Endothelial cell of umbilical vein (primary cell): ENCODE measurements at regions of chr14 and their contacts with region 1.

Region 1: DNA sequence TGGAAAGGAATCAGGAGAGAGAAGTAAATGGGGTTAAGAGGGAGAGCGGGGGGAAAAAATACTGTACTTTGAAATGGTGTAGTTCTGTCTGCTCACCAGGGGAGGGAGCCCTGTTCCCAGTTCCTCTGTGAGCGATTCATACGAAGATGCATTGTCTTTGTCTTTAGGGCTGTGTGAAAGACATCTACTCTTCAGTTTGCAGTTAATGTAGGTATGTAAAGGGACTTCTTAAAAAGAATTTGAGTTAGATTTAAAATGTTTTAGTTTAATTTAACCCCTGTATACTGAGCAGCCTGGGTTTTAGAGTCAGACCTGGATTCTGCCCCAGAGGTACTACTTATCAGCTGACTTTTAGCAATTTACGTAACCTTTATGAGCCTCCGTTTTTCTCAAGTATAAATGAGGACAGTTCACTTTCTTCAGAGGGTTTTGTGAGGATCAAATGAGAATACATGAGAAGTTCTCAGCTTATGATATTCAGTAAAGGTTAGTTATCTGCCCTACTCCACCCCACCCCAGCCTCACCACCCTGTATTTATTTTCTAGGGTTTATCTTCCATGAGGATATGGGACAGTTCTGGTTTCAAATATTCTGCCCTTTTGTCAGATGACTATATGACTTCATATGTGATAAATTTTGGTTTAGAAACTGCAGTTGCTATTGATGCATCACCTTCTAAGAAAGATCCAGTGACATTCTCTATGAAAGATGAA is 82.5 kb upstream of the EVL start:
- DNase-seq: peak; percentile 73
- H3K4me3 ChIP-seq: no peak overlapping the region
- H3K27ac ChIP-seq: no peak overlapping the region
- H3K4me1 ChIP-seq: peaks cover 6% of the 10 kb centered on the region
- H3K27me3 ChIP-seq: no peaks in the 10 kb centered on the region
- CTCF ChIP-seq: peak; percentile 75 to 82
- POLR2A ChIP-seq: no peak

Region 2: DNA sequence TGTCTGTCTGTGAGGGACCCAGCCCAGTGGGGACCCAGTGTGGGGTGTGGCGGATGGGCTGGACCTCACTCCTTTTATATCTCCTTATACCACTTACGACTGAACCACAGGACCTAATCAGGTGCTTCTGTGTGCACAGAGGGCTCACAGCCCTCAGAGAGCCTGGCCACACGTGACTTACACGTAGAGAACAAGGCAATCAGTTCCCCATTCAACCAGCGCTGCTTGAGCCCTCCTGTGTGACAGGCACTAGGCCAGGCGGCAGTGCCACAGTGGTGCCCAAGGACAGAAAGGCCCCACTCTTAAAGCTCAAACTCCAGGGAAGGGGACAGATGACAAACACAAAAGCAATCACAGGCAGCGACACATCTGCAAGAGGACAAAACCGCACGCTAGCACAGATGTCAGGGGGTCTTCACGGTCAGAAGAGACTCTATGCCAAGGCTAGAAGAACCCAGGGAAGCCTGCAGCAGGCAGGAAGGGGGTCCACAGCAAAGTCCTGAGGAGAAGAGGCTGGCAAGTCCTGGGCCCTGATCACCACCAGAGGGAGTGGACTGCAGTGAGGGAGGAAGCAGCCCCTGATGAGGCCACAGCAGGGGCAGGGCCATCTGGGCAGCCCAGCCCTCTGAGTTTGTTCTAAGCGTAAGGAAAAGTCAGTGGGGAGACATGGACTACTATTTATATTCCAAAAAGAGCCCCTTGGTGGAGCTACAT is 541.4 kb before region 1 on chr14:
- CTCF ChIA-PET with region 1: no interaction called
- POLR2A ChIA-PET with region 1: no interaction called
- dilution Hi-C with region 1: no loop called
- intact Hi-C with region 1: no loop called
- DNase-seq: no peak
- H3K4me3 ChIP-seq: no peak overlapping the region
- H3K27ac ChIP-seq: no peak overlapping the region
- H3K4me1 ChIP-seq: peaks cover 6% of the 10 kb centered on the region
- H3K27me3 ChIP-seq: no peaks in the 10 kb centered on the region
- CTCF ChIP-seq: peak in 1 of 2 donors; percentile 18
- POLR2A ChIP-seq: no peak

Region 3: DNA sequence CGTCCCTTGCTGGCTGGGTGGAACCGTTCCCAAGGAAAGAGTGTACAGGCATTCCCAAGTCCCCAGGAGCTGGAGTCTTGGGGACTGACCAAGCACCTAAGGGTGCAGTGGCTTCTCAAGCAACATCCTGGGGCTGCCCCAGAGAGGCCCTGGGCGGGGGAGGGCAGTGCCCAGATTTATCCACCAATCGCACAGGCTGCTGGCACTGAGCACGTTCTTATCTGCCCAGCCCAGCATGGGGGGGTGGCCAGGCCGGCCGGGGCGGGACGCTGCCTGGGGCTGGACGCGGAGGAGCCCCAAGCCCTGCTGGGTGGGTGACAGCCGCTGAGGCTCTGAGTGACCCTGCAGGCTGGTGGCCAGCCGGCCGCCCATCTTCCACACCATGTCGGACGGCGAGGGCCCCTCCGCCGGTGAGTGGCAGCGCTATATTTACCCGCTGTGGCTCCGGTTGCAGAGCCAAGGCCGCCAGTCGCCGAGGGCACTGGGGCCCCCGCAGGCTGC is 245.2 kb before region 1 on chr14:
- CTCF ChIA-PET with region 1: no interaction called
- POLR2A ChIA-PET with region 1: no interaction called
- dilution Hi-C with region 1: no loop called
- intact Hi-C with region 1: no loop called
- DNase-seq: peak; percentile 79
- H3K4me3 ChIP-seq: peak overlapping the region; percentile 39 to 57 (median 55)
- H3K27ac ChIP-seq: peak overlapping the region; percentile 81
- H3K4me1 ChIP-seq: peaks cover 39% of the 10 kb centered on the region
- H3K27me3 ChIP-seq: no peaks in the 10 kb centered on the region
- CTCF ChIP-seq: no peak
- POLR2A ChIP-seq: peak; percentile 53

Region 4: GRCh38 chr14:99971087-99971940 is 11.4 kb before region 1 on chr14:
- CTCF ChIA-PET with region 1: interaction called, 8 read pairs
- POLR2A ChIA-PET with region 1: interaction called, 3 read pairs
- dilution Hi-C with region 1: no loop called
- intact Hi-C with region 1: loop called (anchors 1 kb)
- DNase-seq: peak; percentile 85
- H3K4me3 ChIP-seq: peak overlapping the region; percentile 47 to 80 (median 49)
- H3K27ac ChIP-seq: no peak overlapping the region
- H3K4me1 ChIP-seq: peaks cover 7% of the 10 kb centered on the region
- H3K27me3 ChIP-seq: peaks cover 10 to 12% of the 10 kb centered on the region in 2 experiments
- CTCF ChIP-seq: no peak
- POLR2A ChIP-seq: peak; percentile 33

Region 5: GRCh38 chr14:100025111-100025510 is 42.4 kb after region 1 on chr14:
- CTCF ChIA-PET with region 1: interaction called, 5 read pairs
- POLR2A ChIA-PET with region 1: no interaction called
- dilution Hi-C with region 1: no loop called
- intact Hi-C with region 1: loop called (anchors 1 kb)
- DNase-seq: peak; percentile 35
- H3K4me3 ChIP-seq: no peak overlapping the region
- H3K27ac ChIP-seq: no peak overlapping the region
- H3K4me1 ChIP-seq: peaks cover under 1% of the 10 kb centered on the region
- H3K27me3 ChIP-seq: no peaks in the 10 kb centered on the region
- CTCF ChIP-seq: peak in 1 of 2 donors; percentile 48
- POLR2A ChIP-seq: no peak

Region 6: DNA sequence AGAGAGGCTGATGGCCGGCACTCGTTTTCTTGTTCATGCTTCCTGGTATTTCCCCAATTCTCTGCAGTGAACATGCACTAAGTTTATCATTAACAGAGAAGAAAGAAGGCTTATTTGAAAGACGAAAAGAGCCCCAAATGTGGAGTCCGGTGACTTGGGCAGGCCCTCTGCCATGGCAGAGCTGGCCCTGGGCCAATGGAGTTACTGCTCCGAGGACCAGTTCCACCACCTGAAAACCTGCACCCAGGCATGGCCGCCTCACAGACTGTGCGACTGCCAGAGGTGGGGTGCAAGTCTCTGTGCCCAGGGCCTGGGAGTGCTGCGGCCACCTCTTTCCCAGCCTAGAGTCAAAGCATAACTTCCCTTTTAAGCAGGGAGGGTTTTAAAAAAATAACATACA is 151.9 kb after region 1 on chr14:
- CTCF ChIA-PET with region 1: no interaction called
- POLR2A ChIA-PET with region 1: no interaction called
- dilution Hi-C with region 1: no loop called
- intact Hi-C with region 1: no loop called
- DNase-seq: no peak
- H3K4me3 ChIP-seq: no peak overlapping the region
- H3K27ac ChIP-seq: no peak overlapping the region
- H3K4me1 ChIP-seq: no peaks in the 10 kb centered on the region
- H3K27me3 ChIP-seq: no peaks in the 10 kb centered on the region
- CTCF ChIP-seq: no peak
- POLR2A ChIP-seq: no peak